Naive thymus-derived CD4-positive, alpha-beta T cell (primary cell): ENCODE measurements at regions of chr10 and their contacts with region 1.

Region 1: DNA sequence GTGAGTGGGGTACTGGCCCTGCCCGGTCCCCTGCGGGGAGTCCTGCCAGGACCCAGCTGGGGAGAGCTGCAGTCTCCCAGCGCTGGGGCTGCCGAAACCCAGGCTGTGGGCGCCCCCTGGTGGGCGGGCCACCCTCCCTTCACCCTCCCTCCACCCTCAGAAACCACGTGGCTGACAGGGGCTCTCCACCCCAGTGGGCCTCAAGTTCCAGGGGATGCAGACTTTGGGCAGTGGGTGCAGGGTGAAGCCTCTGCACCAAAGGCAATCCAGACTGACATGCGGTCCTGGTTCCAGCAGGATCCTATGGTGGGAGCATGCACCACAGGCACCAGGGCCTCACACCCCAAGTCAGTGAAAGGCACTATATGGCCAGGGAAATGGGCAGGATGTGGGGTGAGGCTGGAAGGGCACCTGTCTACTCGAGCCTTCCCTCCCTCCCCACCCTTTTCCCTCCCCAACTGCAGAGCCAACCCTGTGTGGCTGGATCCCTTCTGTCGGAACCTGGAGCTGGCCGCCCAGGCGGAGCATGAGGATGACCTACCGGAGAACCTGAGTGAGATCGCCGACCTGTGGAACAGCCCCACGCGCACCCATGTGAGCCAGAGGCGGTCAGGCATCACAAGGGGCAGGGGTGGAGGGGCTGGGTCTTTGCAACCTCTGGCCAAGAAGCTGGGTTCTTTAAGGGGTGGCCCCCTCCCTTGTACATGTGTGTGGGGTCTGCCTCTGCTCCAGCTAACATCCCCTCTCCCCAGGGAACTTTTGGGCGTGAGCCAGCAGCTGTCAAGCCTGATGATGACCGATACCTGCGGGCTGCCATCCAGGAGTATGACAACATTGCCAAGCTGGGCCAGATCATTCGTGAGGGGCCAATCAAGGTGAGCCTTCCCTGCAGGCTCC is 38.8 kb downstream of the PSAP start:
- DNase-seq: peak; percentile 64 to 87 (median 80)
- ATAC-seq: peak; percentile 91
- H3K4me3 ChIP-seq: no peak overlapping the region
- H3K4me3 Mint-ChIP-seq: no peak overlapping the region
- H3K27ac ChIP-seq: no peak overlapping the region
- H3K27ac Mint-ChIP-seq: peak overlapping the region in 1 of 9 donors; percentile 48
- H3K4me1 ChIP-seq: no peaks in the 10 kb centered on the region
- H3K4me1 Mint-ChIP-seq: peaks cover 0 to 7% (median 0%) of the 10 kb centered on the region in 7 donors
- H3K27me3 ChIP-seq: no peaks in the 10 kb centered on the region
- H3K27me3 Mint-ChIP-seq: no peaks in the 10 kb centered on the region

Region 2: DNA sequence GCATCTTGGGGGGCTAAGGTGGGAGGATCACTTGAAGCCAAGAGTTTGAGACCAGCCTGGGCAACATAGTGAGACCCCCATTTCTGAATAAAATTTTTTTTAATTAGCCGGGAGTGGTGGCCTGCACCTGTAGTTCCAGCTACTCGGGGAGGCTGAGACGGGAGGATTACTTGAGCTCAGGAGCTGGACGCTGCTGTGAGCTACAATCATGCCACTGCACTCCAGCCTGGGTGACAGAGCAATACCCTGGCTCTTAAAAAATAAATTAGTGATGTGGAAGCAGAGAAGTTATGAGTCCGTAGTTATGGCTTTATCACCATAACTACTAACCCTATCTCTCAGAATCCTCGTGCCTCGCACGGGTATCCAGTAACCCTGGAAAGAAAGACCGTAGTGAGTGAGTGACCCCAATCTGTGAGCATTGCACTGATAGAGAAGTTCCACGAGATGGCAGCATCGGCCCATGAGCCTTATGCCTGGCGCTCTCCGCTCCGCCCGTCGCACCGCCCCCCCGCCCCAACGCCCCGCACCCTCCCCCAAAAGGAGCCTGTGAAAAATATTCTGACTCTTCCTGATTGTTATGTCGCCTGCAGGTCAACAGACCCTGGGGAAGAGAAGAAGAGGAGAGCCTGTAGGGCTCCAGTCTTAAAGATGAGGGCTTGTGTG is 498.1 kb before region 1 on chr10:
- CTCF ChIA-PET with region 1: interaction called, 9 read pairs
- POLR2A ChIA-PET with region 1: no interaction called
- intact Hi-C with region 1: loop called (anchors 1 kb)
- DNase-seq: peak; percentile 18 to 56 (median 49)
- ATAC-seq: peak; percentile 62
- H3K4me3 ChIP-seq: no peak overlapping the region
- H3K4me3 Mint-ChIP-seq: peak overlapping the region in 3 of 10 donors; percentile 3 to 48 (median 25)
- H3K27ac ChIP-seq: no peak overlapping the region
- H3K27ac Mint-ChIP-seq: peak overlapping the region in 1 of 9 donors; percentile 55
- H3K4me1 ChIP-seq: peaks cover 5 to 6% of the 10 kb centered on the region in 2 donors
- H3K4me1 Mint-ChIP-seq: peaks cover 0 to 26% (median 13%) of the 10 kb centered on the region in 7 donors
- H3K27me3 ChIP-seq: no peaks in the 10 kb centered on the region
- H3K27me3 Mint-ChIP-seq: peaks cover 0 to 16% (median 14%) of the 10 kb centered on the region in 5 donors

Region 3: DNA sequence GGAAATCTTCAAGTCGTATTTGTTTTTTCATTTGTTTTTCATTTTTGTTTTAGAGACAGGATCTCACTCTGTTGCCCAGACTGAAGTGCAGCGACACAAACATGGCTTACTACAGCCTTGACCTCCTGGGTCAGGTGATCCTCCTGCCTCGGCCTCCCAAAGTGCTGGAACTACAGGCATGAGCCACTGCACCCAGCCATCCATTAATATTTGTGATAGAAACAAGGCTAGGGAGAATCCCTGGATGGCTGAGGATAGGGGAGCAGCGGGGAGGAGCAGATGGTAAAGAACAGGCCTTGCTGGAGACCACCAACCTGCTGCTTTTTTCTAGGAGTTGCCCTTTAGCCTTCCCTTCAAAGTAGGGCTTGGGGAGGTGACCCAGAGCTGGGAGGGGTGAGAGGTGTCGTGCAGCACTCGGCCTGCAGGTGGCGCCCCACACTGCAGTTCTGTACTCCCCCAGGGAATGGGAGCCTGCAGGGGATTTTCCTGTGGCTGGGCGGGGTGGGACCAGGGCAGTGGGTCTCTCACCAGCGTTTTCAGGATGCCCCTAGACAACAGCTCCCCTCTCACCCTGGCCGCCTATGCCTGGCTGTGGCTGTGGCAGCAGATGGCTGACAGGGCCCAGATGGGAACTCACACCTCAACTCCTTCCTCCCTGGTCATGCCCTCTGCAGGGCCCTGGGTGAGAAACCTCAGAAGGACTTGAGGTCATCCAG is 428.1 kb before region 1 on chr10:
- CTCF ChIA-PET with region 1: interaction called, 30 read pairs
- POLR2A ChIA-PET with region 1: no interaction called
- intact Hi-C with region 1: loop called (anchors 1 to 2 kb)
- DNase-seq: peak; percentile 40 to 82 (median 61)
- ATAC-seq: peak; percentile 94
- H3K4me3 ChIP-seq: no peak overlapping the region
- H3K4me3 Mint-ChIP-seq: no peak overlapping the region
- H3K27ac ChIP-seq: no peak overlapping the region
- H3K27ac Mint-ChIP-seq: no peak overlapping the region
- H3K4me1 ChIP-seq: no peaks in the 10 kb centered on the region
- H3K4me1 Mint-ChIP-seq: no peaks in the 10 kb centered on the region
- H3K27me3 ChIP-seq: no peaks in the 10 kb centered on the region
- H3K27me3 Mint-ChIP-seq: peaks cover 0 to 24% (median 7%) of the 10 kb centered on the region in 5 donors

Region 4: DNA sequence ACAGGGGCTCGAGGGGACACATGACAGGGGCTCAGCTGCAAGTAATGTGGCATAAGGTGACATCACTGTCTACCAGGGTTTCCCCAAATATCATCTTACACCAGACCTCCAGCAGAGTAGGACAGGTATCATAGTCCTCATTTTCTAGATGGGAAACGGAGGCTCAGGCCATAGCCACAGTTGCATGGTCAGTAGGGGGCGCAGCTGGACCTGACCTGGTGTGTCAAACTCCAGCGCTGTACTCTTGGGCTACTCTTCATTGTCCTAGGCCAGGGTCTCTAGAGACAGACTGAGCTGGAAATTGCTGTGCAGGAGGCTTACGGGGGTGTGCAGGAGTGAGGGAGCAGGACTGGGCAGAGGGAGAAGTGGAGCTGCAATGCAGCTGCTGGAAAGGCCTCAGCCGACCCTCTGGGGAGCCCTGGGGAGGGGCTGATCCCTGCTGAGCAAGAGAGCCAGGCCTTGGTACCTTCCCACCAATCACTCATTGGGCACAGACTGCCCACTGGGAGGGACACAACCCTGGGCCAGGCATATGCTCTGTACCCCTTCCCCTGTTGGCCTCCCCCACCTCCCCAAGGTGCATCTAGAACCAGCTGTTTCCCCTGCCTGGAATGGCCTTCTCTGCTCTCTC is 325.7 kb before region 1 on chr10:
- CTCF ChIA-PET with region 1: no interaction called
- POLR2A ChIA-PET with region 1: no interaction called
- intact Hi-C with region 1: loop called in 1 of 2 experiments (anchors 1 kb)
- DNase-seq: peak in 3 of 9 donors; percentile 3 to 43 (median 4)
- ATAC-seq: peak; percentile 41
- H3K4me3 ChIP-seq: no peak overlapping the region
- H3K4me3 Mint-ChIP-seq: no peak overlapping the region
- H3K27ac ChIP-seq: no peak overlapping the region
- H3K27ac Mint-ChIP-seq: no peak overlapping the region
- H3K4me1 ChIP-seq: no peaks in the 10 kb centered on the region
- H3K4me1 Mint-ChIP-seq: peaks cover 0 to 2% (median 0%) of the 10 kb centered on the region in 7 donors
- H3K27me3 ChIP-seq: no peaks in the 10 kb centered on the region
- H3K27me3 Mint-ChIP-seq: peaks cover 0 to 5% (median 0%) of the 10 kb centered on the region in 5 donors

Region 5: DNA sequence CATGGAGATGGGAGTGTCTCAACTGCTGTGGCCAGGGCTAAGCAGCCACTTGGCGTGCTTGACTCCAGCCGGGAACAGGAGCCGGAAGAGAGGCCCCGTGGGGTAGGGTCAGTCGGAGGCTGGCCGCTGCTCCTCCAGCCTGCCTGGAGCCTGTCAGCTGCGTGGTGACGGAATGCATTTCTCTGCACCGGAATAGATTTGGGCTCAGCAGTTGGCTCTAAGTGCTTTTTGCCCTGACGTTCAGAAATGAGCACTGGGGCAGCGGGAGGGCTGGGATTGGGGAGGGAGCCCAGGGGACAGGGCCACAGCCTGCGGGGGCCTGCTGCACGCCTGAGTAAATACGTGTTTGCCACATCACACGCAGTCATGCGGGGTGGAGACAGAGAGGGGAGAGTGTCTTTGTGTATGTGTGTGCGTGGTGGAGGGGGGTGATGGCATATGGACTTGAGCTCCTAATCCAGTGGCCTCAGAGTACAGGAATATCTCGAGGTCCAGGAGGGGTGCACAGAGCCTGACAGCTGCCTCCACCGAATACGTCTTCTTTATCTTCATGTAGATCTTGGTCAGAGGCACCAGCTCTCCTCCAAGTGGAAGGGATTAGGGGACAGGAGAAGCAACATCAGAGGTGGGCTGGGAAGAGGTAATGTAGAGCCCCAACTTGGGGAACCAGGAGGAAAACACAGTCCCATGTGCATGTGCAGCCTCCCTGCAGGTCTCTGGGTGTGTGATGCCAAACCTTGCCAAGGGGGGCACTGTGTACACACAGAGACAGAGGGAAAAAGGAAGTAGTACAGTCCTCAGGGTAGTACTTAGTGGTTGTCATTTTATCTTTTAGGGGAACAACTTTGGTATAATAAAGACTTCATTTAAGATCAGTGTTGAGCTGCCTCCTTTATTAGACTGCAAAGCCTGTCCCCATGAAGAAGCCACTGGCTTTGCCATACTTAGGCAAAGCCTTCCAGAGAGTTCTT is 264.1 kb before region 1 on chr10:
- CTCF ChIA-PET with region 1: no interaction called
- POLR2A ChIA-PET with region 1: no interaction called
- intact Hi-C with region 1: no loop called
- DNase-seq: peak in 1 of 9 donors; percentile 37
- ATAC-seq: peak; percentile 66
- H3K4me3 ChIP-seq: no peak overlapping the region
- H3K4me3 Mint-ChIP-seq: no peak overlapping the region
- H3K27ac ChIP-seq: no peak overlapping the region
- H3K27ac Mint-ChIP-seq: no peak overlapping the region
- H3K4me1 ChIP-seq: no peaks in the 10 kb centered on the region
- H3K4me1 Mint-ChIP-seq: no peaks in the 10 kb centered on the region
- H3K27me3 ChIP-seq: no peaks in the 10 kb centered on the region
- H3K27me3 Mint-ChIP-seq: no peaks in the 10 kb centered on the region

Region 6: GRCh38 chr10:71664585-71664984 is 147.7 kb before region 1 on chr10:
- CTCF ChIA-PET with region 1: interaction called, 3 read pairs
- POLR2A ChIA-PET with region 1: no interaction called
- intact Hi-C with region 1: loop called in 1 of 2 experiments (anchors 1 kb)
- DNase-seq: no peak
- ATAC-seq: no peak
- H3K4me3 ChIP-seq: no peak overlapping the region
- H3K4me3 Mint-ChIP-seq: no peak overlapping the region
- H3K27ac ChIP-seq: no peak overlapping the region
- H3K27ac Mint-ChIP-seq: peak overlapping the region in 1 of 9 donors; percentile 87
- H3K4me1 ChIP-seq: peaks cover 0 to 10% of the 10 kb centered on the region in 2 donors
- H3K4me1 Mint-ChIP-seq: peaks cover 14 to 35% (median 20%) of the 10 kb centered on the region in 7 donors
- H3K27me3 ChIP-seq: no peaks in the 10 kb centered on the region
- H3K27me3 Mint-ChIP-seq: no peaks in the 10 kb centered on the region

Region 7: DNA sequence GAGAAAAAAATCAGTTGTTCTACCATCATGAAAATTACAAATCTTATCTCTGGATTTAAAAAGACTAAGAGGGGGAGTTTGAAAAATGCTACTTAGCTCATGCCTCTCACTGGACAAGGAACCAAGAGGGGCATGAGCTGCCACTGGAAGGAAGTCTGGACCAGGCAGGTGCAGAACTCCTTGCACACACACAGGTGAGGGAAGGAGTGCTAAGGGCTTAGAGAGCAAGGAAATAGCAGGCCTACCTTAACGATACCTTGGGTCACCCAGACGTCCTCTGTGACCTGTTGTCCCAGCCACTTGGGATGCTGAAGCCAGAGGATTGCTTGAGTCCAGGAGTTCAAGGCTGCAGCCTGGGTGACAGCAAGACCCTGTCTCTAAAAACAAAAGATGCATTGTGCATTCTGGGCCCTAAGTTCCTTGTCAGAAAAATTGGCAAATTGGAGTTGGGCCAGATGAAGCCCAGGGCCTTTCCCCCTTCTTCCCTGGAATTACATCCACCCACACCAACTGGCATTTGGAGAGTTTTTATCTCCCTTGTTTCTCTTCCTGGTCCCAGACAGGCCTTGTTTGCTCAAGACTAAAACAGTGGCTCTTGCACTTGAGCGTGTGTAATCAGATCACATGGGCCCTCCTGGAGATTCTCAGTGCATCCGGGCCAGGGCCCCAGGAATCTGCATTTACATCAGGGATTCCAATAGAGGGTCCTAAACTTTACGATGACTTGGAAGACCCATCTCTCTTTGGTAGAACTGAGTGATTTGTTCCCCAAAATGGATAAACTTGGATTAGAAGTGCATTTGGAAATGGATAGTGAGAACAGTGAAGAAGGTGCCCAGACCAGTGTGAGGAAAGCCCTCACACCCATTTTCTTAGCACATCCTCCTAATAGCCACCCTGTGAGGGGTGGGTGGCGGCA is 464.4 kb after region 1 on chr10:
- CTCF ChIA-PET with region 1: no interaction called
- POLR2A ChIA-PET with region 1: no interaction called
- intact Hi-C with region 1: no loop called
- DNase-seq: no peak
- ATAC-seq: no peak
- H3K4me3 ChIP-seq: peak overlapping the region; percentile 95
- H3K4me3 Mint-ChIP-seq: peak overlapping the region; percentile 97 to 100 (median 99)
- H3K27ac ChIP-seq: peak overlapping the region; percentile 96
- H3K27ac Mint-ChIP-seq: peak overlapping the region; percentile 93 to 98 (median 95)
- H3K4me1 ChIP-seq: peaks cover 9 to 20% of the 10 kb centered on the region in 2 donors
- H3K4me1 Mint-ChIP-seq: peaks cover 31 to 62% (median 56%) of the 10 kb centered on the region in 7 donors
- H3K27me3 ChIP-seq: no peaks in the 10 kb centered on the region
- H3K27me3 Mint-ChIP-seq: no peaks in the 10 kb centered on the region